Right ventricle myocardium superior (tissue), 1 donor: ENCODE measurements at regions of chr17 and their contacts with region 1.

Region 1: GRCh38 chr17:35764123-35764991 is 3.7 kb downstream of the C17orf50 start:
- DNase-seq: peak; percentile 93
- ATAC-seq: peak; percentile 99

Region 2: DNA sequence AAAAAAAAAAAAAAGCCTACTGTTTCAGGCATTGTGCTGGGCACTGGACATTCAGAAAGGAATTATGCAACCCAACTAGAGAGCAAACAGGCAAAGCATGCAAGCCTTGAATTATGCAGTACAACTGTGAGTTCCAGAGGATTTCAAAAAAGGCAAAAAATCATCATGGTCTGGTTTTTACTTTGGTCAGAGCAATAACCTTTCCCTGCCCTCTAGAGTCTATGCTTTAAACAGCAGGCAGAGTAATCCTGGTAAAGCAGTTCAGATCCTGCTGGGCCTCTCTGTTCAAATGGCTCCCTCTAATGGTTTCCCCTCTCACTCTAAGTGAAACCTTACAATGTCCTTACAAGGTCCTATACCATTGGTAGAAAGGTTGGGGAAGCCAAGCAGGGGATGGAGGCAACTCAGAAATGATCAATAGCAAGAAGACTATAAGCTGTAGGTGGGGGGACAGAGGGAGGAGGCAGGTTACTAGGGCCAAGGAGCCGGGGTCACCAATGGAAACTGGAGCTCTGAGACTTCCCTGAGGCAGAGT is 40.4 kb after region 1 on chr17:
- intact Hi-C with region 1: loop called (anchors 1 kb)
- DNase-seq: no peak
- ATAC-seq: peak; percentile 65

Region 3: GRCh38 chr17:35841505-35841904 is 77.1 kb after region 1 on chr17:
- intact Hi-C with region 1: no loop called
- DNase-seq: no peak
- ATAC-seq: no peak

Region 4: DNA sequence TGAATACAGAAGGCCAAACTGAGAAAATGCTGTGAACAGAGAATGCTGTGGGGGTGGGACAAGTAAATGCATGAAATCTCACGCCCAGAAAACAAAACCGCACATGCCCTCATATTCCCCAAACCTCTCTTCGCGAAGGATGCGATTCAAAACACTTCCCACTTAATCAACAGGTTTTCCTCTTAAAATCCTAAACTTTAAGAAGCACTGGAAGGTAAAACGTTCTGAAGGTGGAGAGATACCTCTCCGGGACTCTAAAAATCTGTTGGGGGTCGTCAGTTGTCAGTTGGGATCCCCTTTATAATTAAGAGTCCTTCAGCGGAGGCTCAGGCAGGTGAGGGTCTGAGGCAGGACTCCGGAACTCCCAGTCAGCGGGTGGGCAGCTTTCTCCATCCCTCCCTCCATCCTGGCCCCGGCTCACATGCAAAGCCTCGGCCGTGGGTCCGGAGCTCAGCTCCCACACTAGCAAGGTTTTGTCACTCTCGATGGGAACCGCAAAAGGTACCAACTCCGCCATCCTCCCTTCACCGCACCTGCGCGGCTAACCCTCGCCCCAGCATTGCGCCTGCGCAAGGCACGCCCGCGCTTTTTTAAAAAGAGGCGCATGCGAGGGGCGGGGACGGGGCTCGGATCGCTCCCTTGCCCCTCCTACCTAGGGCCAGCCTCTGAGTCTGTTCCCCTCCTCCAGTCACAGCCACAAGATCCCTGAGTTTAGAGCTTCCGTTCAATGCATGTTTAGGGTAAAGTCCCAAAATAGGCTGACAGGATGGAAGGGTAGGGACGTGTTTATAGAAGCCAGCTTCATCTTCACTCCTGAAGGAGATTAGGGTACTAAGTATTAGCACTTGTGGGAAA is 166.1 kb after region 1 on chr17 and contains the start of gene RDM1:
- intact Hi-C with region 1: no loop called
- DNase-seq: peak; percentile 74
- ATAC-seq: peak; percentile 86
- total RNA-seq, gene RDM1: not detected